ENCODE measurements at regions of chr2 and their contacts with region 1.

Region 1: GRCh38 chr2:183259921-183260320 is 135.7 kb downstream of the NUP35 start:
- DNase-seq: no peak
- H3K4me3 ChIP-seq: no peak overlapping the region
- H3K27ac ChIP-seq: no peak overlapping the region
- H3K4me1 ChIP-seq: no peaks in the 10 kb centered on the region
- H3K27me3 ChIP-seq: no peaks in the 10 kb centered on the region
- CTCF ChIP-seq: no peak

Region 2: DNA sequence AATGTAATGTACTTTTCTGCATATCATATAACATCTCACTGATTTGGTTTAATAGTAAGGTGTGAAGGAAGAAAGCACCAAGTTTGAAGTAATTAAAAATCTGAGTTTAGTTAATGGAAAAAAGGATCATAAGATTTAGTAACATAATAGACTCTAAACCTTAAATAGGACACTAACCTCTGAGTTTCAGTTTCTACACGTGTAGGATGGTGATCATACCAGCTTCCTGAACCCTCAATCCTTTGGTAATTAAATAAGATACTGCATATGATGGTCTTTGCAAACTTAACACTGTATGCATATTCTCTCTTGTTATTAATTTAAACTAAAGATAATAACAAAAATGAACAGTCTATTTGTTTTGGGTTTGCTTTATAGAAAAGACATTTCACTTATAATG is 81.1 kb after region 1 on chr2:
- CTCF ChIA-PET with region 1: no interaction called
- POLR2A ChIA-PET with region 1: no interaction called
- intact Hi-C with region 1: loop called (anchors 5 kb)
- DNase-seq: no peak
- H3K4me3 ChIP-seq: no peak overlapping the region
- H3K27ac ChIP-seq: no peak overlapping the region
- H3K4me1 ChIP-seq: no peaks in the 10 kb centered on the region
- H3K27me3 ChIP-seq: no peaks in the 10 kb centered on the region
- CTCF ChIP-seq: no peak

Measured in A673 (cell line).